Caco-2 (cell line): ENCODE measurements at regions of chr14 and their contacts with region 1.

Region 1: GRCh38 chr14:64704143-64704742 is at the start of gene PLEKHG3:
- DNase-seq: peak; percentile 92 to 94
- H3K4me3 ChIP-seq: peak within 1 kb of the TSS; percentile 81
- H3K4me3 Mint-ChIP-seq: peak within 1 kb of the TSS; percentile 83
- H3K27ac Mint-ChIP-seq: peak within 1 kb of the TSS; percentile 85
- H3K4me1 ChIP-seq: peaks cover 40% of the 10 kb centered on the region
- H3K4me1 Mint-ChIP-seq: peaks cover 51% of the 10 kb centered on the region
- H3K27me3 ChIP-seq: no peaks in the 10 kb centered on the region
- H3K27me3 Mint-ChIP-seq: no peaks in the 10 kb centered on the region
- CTCF ChIP-seq: no peak
- total RNA-seq, gene PLEKHG3: 85.9 and 90.8 TPM in 2 replicates

Region 2: GRCh38 chr14:64540208-64541157 is 163.8 kb before region 1 on chr14 and contains the start of gene HSPA2:
- CTCF ChIA-PET with region 1: no interaction called
- POLR2A ChIA-PET with region 1: interaction called, 3 read pairs
- intact Hi-C with region 1: loop called (anchors 1 kb)
- DNase-seq: peak; percentile 98 to 99
- H3K4me3 ChIP-seq: peak within 1 kb of the TSS; percentile 49
- H3K4me3 Mint-ChIP-seq: peak within 1 kb of the TSS; percentile 71
- H3K27ac Mint-ChIP-seq: peak within 1 kb of the TSS; percentile 79
- H3K4me1 ChIP-seq: peaks cover 14% of the 10 kb centered on the region; the same call in 1 of the 2 replicates
- H3K4me1 Mint-ChIP-seq: peaks cover 16% of the 10 kb centered on the region
- H3K27me3 ChIP-seq: no peaks in the 10 kb centered on the region
- H3K27me3 Mint-ChIP-seq: no peaks in the 10 kb centered on the region
- CTCF ChIP-seq: peak; percentile 41 to 78
- total RNA-seq, gene HSPA2: 8.3 and 8.7 TPM in 2 replicates

Region 3: DNA sequence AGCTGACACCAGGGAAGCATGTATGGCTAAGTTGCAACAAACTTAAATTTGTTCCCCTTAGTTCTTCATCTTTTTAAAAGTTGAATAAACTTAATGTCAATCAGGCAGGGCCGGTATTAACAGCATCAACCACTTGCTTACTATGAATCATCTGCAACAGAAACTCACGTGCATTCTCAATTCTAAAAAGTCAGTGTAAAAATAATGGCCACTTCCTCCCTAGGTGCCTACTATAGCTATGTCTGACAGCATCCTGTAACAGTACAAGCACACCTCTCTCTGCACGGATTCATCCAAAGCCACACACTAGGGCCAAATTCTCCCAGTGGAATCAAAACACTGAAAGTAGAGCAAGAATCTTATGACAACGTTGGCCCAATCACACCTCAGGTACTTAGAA is 105.8 kb before region 1 on chr14:
- CTCF ChIA-PET with region 1: no interaction called
- POLR2A ChIA-PET with region 1: no interaction called
- intact Hi-C with region 1: no loop called
- DNase-seq: no peak
- H3K4me3 ChIP-seq: no peak overlapping the region
- H3K4me3 Mint-ChIP-seq: no peak overlapping the region
- H3K27ac Mint-ChIP-seq: no peak overlapping the region
- H3K4me1 ChIP-seq: peaks cover 16% of the 10 kb centered on the region
- H3K4me1 Mint-ChIP-seq: peaks cover 7% of the 10 kb centered on the region
- H3K27me3 ChIP-seq: no peaks in the 10 kb centered on the region
- H3K27me3 Mint-ChIP-seq: no peaks in the 10 kb centered on the region
- CTCF ChIP-seq: no peak

Region 4: GRCh38 chr14:64671591-64671990 is 32.7 kb before region 1 on chr14:
- CTCF ChIA-PET with region 1: interaction called, 3 read pairs
- POLR2A ChIA-PET with region 1: interaction called, 5 read pairs
- intact Hi-C with region 1: loop called (anchors 1 kb)
- DNase-seq: peak in 1 of 2 experiments; percentile 55
- H3K4me3 ChIP-seq: no peak overlapping the region
- H3K4me3 Mint-ChIP-seq: no peak overlapping the region
- H3K27ac Mint-ChIP-seq: no peak overlapping the region
- H3K4me1 ChIP-seq: peaks cover 11% of the 10 kb centered on the region; the same call in 1 of the 2 replicates
- H3K4me1 Mint-ChIP-seq: peaks cover 10% of the 10 kb centered on the region
- H3K27me3 ChIP-seq: no peaks in the 10 kb centered on the region
- H3K27me3 Mint-ChIP-seq: no peaks in the 10 kb centered on the region
- CTCF ChIP-seq: peak; percentile 67 to 70

Region 5: GRCh38 chr14:64723691-64724577 is 19.7 kb after region 1 on chr14:
- CTCF ChIA-PET with region 1: interaction called, 3 read pairs
- POLR2A ChIA-PET with region 1: interaction called, 4 read pairs
- intact Hi-C with region 1: loop called (anchors 2 kb)
- DNase-seq: no peak
- H3K4me3 ChIP-seq: no peak overlapping the region
- H3K4me3 Mint-ChIP-seq: no peak overlapping the region
- H3K27ac Mint-ChIP-seq: peak overlapping the region; percentile 72
- H3K4me1 ChIP-seq: peaks cover 75% of the 10 kb centered on the region
- H3K4me1 Mint-ChIP-seq: peaks cover 41% of the 10 kb centered on the region
- H3K27me3 ChIP-seq: no peaks in the 10 kb centered on the region
- H3K27me3 Mint-ChIP-seq: no peaks in the 10 kb centered on the region
- CTCF ChIP-seq: no peak